ENCODE measurements at regions of chr18 and their contacts with region 1.

Region 1: GRCh38 chr18:77207540-77207939 is 42.1 kb upstream of the GALR1 start:
- DNase-seq: peak; percentile 74
- H3K4me3 Mint-ChIP-seq: no peak overlapping the region
- H3K27ac Mint-ChIP-seq: peak overlapping the region; percentile 76
- H3K4me1 Mint-ChIP-seq: peaks cover 32% of the 10 kb centered on the region
- H3K27me3 Mint-ChIP-seq: no peaks in the 10 kb centered on the region

Region 2: DNA sequence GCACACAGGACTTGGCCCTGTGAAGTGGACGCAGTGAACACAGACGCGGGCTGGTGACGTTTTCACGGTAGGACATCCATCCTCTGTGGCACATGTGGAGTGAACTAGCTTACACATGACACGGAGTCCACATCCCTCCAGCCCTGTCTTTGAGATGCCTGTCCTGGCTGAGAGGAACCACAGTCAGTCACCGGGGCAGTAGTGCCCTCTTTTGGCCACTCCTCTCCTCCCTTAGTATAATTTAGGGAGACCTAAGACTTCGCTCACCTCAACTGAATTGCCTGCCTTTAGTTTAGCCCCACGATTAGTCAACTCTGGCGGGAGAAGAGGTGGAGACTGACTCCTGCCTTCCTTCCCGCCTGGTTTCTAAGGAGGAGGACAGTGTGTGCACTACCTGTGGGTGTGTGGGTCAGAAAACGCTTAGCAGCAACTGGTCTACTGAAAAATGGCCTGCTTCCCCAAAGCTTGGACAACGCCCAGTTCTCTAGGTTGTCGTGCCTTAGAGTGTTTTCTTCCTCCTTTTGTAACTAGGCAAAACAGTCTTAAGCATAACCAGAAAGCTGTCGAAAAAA is 145.5 kb before region 1 on chr18:
- CTCF ChIA-PET with region 1: interaction called, 5 read pairs
- POLR2A ChIA-PET with region 1: no interaction called
- intact Hi-C with region 1: loop called (anchors 2 kb)
- DNase-seq: peak; percentile 62
- H3K4me3 Mint-ChIP-seq: peak overlapping the region; percentile 58
- H3K27ac Mint-ChIP-seq: peak overlapping the region; percentile 100
- H3K4me1 Mint-ChIP-seq: peaks cover 85% of the 10 kb centered on the region
- H3K27me3 Mint-ChIP-seq: no peaks in the 10 kb centered on the region

Region 3: DNA sequence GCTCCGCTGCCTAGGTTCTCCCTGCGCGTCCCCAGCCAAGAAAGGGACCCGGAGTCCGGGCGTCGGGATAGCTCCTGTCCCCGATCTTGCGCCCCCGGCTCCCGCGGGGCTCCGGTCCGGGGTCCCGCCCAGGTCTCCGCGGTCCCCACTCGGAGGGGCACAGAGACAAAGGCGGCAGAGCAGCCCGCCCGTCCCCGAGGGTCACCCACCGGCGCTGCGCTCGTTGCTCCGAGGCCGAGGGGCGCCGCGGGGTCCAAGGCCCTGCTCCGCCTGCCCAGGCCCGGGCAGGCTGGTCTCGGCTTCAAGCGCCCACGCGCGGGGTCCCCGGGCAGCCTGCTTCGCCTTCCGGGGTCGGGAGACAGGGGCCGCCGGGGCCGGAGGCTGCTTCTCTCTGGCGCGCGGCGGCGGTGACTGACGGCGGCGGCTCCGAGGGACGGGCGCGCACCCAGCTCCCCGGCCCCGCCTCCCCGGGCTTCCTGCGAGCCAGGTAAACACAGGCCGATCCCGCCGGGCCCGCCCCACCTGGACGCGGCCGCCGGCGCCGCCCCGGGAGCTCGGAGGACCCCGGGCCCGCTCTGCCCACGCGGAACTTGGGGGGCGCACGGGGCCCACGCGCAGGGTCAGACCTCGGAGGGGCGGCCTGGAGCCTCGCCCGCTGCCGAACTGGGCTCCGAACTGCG is 75.0 kb before region 1 on chr18 and contains the start of gene MBP:
- CTCF ChIA-PET with region 1: interaction called, 4 read pairs
- POLR2A ChIA-PET with region 1: no interaction called
- intact Hi-C with region 1: loop called (anchors 2 kb)
- DNase-seq: peak; percentile 79
- H3K4me3 Mint-ChIP-seq: peak within 1 kb of the TSS; percentile 96
- H3K27ac Mint-ChIP-seq: peak within 1 kb of the TSS; percentile 93
- H3K4me1 Mint-ChIP-seq: peaks cover 44% of the 10 kb centered on the region
- H3K27me3 Mint-ChIP-seq: no peaks in the 10 kb centered on the region
- total RNA-seq, gene MBP: 38.9 to 40.4 TPM

Region 4: DNA sequence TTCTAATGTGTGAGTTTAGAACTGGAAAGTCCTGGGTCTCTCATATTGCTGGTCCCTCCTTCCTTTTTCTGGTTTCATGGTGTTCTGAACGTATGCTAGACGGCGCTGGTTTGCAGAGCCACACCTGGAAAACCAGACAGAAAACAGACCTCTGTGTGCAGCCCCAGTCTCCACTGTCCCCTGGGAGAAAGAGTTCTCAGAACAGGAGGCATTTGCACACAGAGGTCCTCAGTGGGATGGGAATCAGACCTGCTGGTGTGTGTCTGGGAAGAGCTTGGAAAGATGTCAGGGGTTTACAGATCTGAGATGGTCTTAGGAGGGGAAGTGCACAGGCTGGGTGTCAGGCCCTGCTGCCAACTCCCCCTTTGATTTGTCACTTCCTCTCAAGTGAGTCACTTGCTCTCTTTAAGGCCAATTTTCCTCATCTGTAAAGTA is 60.1 kb before region 1 on chr18:
- CTCF ChIA-PET with region 1: interaction called, 5 read pairs
- POLR2A ChIA-PET with region 1: no interaction called
- intact Hi-C with region 1: loop called (anchors 1 kb)
- DNase-seq: peak; percentile 40
- H3K4me3 Mint-ChIP-seq: no peak overlapping the region
- H3K27ac Mint-ChIP-seq: peak overlapping the region; percentile 71
- H3K4me1 Mint-ChIP-seq: peaks cover 41% of the 10 kb centered on the region
- H3K27me3 Mint-ChIP-seq: no peaks in the 10 kb centered on the region

Region 5: DNA sequence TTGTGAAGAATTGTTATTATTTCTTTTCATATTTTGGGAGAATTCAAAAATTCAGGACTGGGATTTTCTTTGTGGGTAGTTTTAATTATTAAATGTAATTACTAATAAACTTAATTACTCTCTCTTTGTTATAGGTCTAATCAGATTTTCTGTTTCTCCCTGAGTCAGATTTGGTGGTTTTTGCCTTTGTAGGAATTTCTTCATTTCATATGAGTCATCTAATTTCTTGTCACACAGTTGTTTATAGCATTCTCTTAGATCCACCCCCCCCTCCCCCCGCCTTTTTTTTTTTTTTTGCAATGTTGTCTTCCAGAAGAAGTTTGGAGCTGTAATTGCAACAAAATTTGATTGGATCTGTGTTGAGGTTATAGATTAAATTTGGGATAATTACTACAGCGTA is 16.1 kb after region 1 on chr18:
- CTCF ChIA-PET with region 1: interaction called, 10 read pairs
- POLR2A ChIA-PET with region 1: no interaction called
- intact Hi-C with region 1: loop called (anchors 1 kb)
- DNase-seq: no peak
- H3K4me3 Mint-ChIP-seq: no peak overlapping the region
- H3K27ac Mint-ChIP-seq: no peak overlapping the region
- H3K4me1 Mint-ChIP-seq: peaks cover 11% of the 10 kb centered on the region
- H3K27me3 Mint-ChIP-seq: peaks cover 4% of the 10 kb centered on the region

Measured in activated CD4-positive, alpha-beta memory T cell treated with anti-CD3 and anti-CD28 coated beads for 36 hours (primary cell).